Heart left ventricle (tissue), 16 donors: ENCODE measurements at regions of chr12 and their contacts with region 1.

Region 1: DNA sequence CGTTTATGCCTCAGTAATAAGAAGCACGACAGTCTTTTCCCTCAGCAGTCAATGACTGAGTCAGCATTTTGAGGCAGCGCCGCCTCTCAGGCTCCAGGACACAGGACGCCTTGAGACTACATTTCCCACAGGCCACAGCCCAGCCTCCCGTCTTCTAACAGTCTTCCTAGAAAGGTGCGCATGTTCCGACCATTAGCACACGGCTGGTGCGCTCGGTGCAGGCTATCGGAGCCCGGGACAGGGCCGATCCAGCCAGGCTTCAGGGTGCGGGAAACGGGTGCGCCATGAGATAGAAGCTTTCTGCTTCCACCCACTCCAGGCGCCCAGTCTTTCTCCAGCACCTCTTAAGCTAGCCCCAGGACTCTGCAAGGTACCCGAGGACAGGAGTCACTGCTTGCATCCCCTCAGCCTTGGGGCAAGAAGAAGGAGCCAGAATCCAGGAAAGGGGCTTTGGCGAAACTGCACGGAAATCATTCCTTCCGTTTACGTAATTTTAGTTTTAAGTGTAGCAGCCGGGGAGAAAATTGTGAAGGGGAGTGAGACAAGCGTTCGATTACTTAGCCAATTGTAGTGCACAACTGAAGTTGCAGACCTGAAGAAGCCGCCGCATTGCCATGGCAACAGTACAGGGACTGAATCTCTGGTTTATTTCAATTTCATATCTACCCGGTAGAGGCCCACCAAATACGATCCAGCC is 54.0 kb downstream of the ZNF641 start:
- DNase-seq: peak; percentile 71 to 86 (median 83)
- ATAC-seq: peak; percentile 97 to 100 (median 100)
- H3K4me3 ChIP-seq: peak overlapping the region in 11 of 12 donors; percentile 23 to 68 (median 58)
- H3K27ac ChIP-seq: peak overlapping the region in 5 of 12 donors; percentile 1 to 59 (median 42)
- H3K4me1 ChIP-seq: peaks cover 0 to 8% (median 0%) of the 10 kb centered on the region in 12 donors
- H3K27me3 ChIP-seq: no peaks in the 10 kb centered on the region
- CTCF ChIP-seq: no peak
- POLR2A ChIP-seq: peak in 1 of 2 donors; percentile 48

Region 2: GRCh38 chr12:48197971-48198671 is 98.6 kb before region 1 on chr12:
- intact Hi-C with region 1: loop called in 2 of 10 experiments (anchors 10 kb)
- DNase-seq: peak; percentile 98 to 99 (median 99)
- ATAC-seq: peak; percentile 98 to 100 (median 99)
- H3K4me3 ChIP-seq: peak overlapping the region; percentile 60 to 92 (median 78)
- H3K27ac ChIP-seq: peak overlapping the region; percentile 89 to 100 (median 98)
- H3K4me1 ChIP-seq: peaks cover 0 to 38% (median 16%) of the 10 kb centered on the region in 12 donors
- H3K27me3 ChIP-seq: no peaks in the 10 kb centered on the region
- CTCF ChIP-seq: no peak
- POLR2A ChIP-seq: peak; percentile 61 to 99

Region 3: DNA sequence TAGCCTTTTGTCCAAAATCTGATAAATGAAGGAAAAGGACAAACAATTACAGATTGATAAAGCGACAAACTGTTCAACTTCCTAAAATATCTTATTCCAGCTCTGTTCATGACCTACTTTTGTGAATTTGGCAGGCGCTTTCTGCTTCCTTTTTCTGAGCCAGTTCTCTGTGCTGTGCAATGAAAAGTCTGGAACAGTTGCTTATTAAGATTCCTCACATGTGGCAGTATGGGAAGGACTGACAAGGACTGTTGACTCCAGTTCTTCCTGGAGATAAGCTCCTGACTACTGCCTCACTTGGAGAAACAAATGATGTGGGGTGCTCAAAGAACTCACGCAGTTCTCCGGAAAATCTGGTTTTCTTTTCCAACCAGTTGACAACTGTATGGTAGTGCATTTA is 117.3 kb after region 1 on chr12:
- intact Hi-C with region 1: no loop called
- DNase-seq: peak in 2 of 5 donors; percentile 24 to 31
- ATAC-seq: peak; percentile 89 to 94 (median 91)
- H3K4me3 ChIP-seq: peak overlapping the region in 1 of 12 donors; percentile 3
- H3K27ac ChIP-seq: peak overlapping the region in 11 of 12 donors; percentile 2 to 70 (median 46)
- H3K4me1 ChIP-seq: peaks cover 0 to 19% (median 11%) of the 10 kb centered on the region in 12 donors
- H3K27me3 ChIP-seq: no peaks in the 10 kb centered on the region
- CTCF ChIP-seq: no peak
- POLR2A ChIP-seq: no peak